Activated T-helper 2 cell treated with anti-CD3 and anti-CD28 coated beads, Interferon-gamma antibody, Interleukin-2, Interleukin-4, amounts not matched to agents 10 μg/mL and 5 μg/mL and 100 μg/mL, durations not matched to agents 14 hours and 24 hours and 36 hours (primary cell): ENCODE measurements at regions of chr1 and their contacts with region 1.

Region 1: GRCh38 chr1:25006770-25007169 is 76.7 kb upstream of the RUNX3 start:
- DNase-seq: no peak
- H3K4me3 Mint-ChIP-seq: no peak overlapping the region
- H3K27ac Mint-ChIP-seq: no peak overlapping the region
- H3K4me1 Mint-ChIP-seq: peaks cover 67% of the 10 kb centered on the region
- H3K27me3 Mint-ChIP-seq: no peaks in the 10 kb centered on the region

Region 2: GRCh38 chr1:24744911-24745710 is 261.7 kb before region 1 on chr1 and contains the start of gene CLIC4:
- intact Hi-C with region 1: no loop called
- DNase-seq: peak; percentile 100
- H3K4me3 Mint-ChIP-seq: peak within 1 kb of the TSS; percentile 91
- H3K27ac Mint-ChIP-seq: peak within 1 kb of the TSS; percentile 84
- H3K4me1 Mint-ChIP-seq: peaks cover 51% of the 10 kb centered on the region
- H3K27me3 Mint-ChIP-seq: no peaks in the 10 kb centered on the region
- total RNA-seq, gene CLIC4: 17.9 and 18.2 TPM in 2 replicates

Region 3: GRCh38 chr1:24955161-24955560 is 51.6 kb before region 1 on chr1:
- intact Hi-C with region 1: no loop called
- DNase-seq: peak; percentile 79
- H3K4me3 Mint-ChIP-seq: peak overlapping the region; percentile 78
- H3K27ac Mint-ChIP-seq: peak overlapping the region; percentile 95
- H3K4me1 Mint-ChIP-seq: peaks cover 80% of the 10 kb centered on the region
- H3K27me3 Mint-ChIP-seq: no peaks in the 10 kb centered on the region

Region 4: GRCh38 chr1:24990779-24991641 is 15.8 kb before region 1 on chr1:
- intact Hi-C with region 1: loop called (anchors 2 kb)
- DNase-seq: no peak
- H3K4me3 Mint-ChIP-seq: no peak overlapping the region
- H3K27ac Mint-ChIP-seq: peak overlapping the region; percentile 15
- H3K4me1 Mint-ChIP-seq: peaks cover 62% of the 10 kb centered on the region
- H3K27me3 Mint-ChIP-seq: peaks cover 2% of the 10 kb centered on the region

Region 5: GRCh38 chr1:25022361-25023189 is 15.8 kb after region 1 on chr1:
- intact Hi-C with region 1: loop called (anchors 2 kb)
- DNase-seq: peak; percentile 91
- H3K4me3 Mint-ChIP-seq: peak overlapping the region; percentile 76
- H3K27ac Mint-ChIP-seq: peak overlapping the region; percentile 96
- H3K4me1 Mint-ChIP-seq: peaks cover 87% of the 10 kb centered on the region
- H3K27me3 Mint-ChIP-seq: no peaks in the 10 kb centered on the region